A673 (cell line): ENCODE measurements at regions of chr17 and their contacts with region 1.

Region 1: GRCh38 chr17:77494664-77495435 is 354.1 kb downstream of the SEC14L1 start:
- DNase-seq: peak; percentile 84
- H3K4me3 ChIP-seq: no peak overlapping the region
- H3K27ac ChIP-seq: no peak overlapping the region
- H3K4me1 ChIP-seq: peaks cover 5% of the 10 kb centered on the region
- H3K27me3 ChIP-seq: no peaks in the 10 kb centered on the region
- CTCF ChIP-seq: peak; percentile 98

Region 2: DNA sequence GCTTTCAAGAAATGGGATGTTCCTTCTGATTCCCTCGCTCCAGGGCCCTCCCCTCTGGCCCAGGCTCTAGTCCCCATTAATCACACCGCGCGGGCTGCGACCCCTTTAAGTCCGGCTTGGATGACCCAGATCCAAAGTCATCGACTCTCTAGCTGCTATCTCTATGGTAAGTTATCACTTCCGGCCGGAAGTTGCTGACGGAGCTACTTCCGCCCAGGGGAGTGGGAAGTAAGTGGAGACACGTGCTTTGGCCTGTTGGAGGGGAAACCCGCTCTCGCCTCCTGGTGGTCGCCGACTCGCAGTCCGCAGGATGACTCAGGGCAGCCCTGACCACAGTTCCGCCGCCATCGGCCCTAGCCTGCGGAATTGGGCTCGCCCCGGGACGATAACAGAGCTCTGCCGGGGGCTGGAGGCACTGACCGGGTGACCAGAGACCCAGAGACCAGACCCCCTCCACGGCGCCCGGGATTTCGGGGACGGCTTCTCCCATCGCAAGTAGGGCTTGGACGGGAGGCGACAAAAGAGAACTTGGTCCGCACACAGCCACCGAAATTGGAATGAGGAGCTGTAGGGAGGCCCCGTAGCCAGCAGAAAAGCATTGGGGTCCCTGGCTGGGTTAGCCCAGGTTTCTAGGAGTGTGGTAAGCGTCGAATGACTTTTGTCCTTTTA is 406.3 kb before region 1 on chr17:
- CTCF ChIA-PET with region 1: no interaction called
- POLR2A ChIA-PET with region 1: no interaction called
- intact Hi-C with region 1: loop called (anchors 5 kb)
- DNase-seq: peak; percentile 98
- H3K4me3 ChIP-seq: peak overlapping the region; percentile 79
- H3K27ac ChIP-seq: peak overlapping the region; percentile 93
- H3K4me1 ChIP-seq: peaks cover 14% of the 10 kb centered on the region
- H3K27me3 ChIP-seq: no peaks in the 10 kb centered on the region
- CTCF ChIP-seq: peak; percentile 83

Region 3: DNA sequence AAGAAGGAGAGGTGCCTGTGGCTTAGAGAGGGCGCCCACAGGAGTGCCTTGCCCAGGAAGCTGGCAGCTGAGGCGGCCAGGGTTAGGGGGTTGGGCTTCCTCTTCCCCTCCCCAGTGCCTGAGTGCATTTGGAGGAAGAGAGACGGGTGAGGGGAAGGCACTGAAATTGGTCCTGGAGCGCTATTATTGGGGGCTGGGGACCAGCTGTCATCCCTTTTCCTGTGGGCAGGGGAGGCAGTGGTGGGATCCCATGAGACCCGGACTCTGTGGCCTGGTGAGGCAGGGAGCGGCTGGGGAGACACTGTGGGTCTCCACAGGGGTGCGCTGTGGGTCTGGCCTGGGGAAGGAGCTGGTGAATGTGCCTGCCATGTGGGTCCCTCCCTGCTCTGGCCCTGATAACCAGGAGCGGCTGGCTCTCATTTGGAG is 94.4 kb before region 1 on chr17:
- CTCF ChIA-PET with region 1: no interaction called
- POLR2A ChIA-PET with region 1: no interaction called
- intact Hi-C with region 1: loop called (anchors 1 kb)
- DNase-seq: peak; percentile 63
- H3K4me3 ChIP-seq: no peak overlapping the region
- H3K27ac ChIP-seq: no peak overlapping the region
- H3K4me1 ChIP-seq: peaks cover 12% of the 10 kb centered on the region
- H3K27me3 ChIP-seq: no peaks in the 10 kb centered on the region
- CTCF ChIP-seq: peak; percentile 68

Region 4: DNA sequence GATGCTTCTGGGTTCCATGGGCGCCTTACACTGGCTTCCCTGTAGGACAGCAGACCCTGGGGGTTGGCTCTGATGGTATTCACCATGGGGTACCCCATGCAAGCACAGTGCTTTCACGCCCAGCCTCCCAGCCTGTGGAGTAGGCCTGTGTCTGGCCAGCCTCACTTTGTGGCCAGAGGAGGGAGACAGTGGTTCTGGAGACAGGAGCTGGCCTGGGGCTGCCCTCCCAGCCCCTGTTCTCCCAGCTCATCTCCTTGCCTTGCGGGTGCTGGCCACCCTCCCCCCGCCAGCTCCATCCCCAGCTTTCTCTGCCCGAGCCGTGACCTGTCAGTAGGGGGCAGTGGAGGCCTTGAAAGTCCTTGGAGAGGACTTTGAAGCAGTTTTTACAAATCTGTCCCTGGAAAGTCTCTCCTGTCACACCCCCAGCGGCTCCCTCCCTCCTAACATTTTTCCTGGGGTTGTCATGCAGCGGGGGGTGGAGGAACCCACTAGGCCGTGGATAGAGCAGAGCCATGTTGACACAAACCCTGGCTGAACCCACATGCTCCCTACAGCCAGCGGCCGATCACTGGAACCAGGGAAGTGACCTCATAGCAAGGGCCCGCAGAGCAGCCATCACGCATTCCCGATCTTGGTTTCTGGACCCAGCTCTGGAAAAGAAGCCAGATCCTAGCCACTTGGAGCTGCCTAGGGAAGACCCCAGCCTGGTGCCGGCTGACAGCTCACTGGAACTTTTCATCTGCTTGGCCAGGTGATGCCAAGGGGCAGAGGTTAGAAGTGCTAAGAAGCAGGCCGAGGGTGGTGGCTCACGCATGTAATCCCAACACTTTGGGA is 64.7 kb before region 1 on chr17:
- CTCF ChIA-PET with region 1: interaction called, 6 read pairs
- POLR2A ChIA-PET with region 1: no interaction called
- intact Hi-C with region 1: loop called (anchors 1 kb)
- DNase-seq: peak; percentile 86
- H3K4me3 ChIP-seq: no peak overlapping the region
- H3K27ac ChIP-seq: no peak overlapping the region
- H3K4me1 ChIP-seq: peaks cover 60% of the 10 kb centered on the region
- H3K27me3 ChIP-seq: no peaks in the 10 kb centered on the region
- CTCF ChIP-seq: peak; percentile 82

Region 5: DNA sequence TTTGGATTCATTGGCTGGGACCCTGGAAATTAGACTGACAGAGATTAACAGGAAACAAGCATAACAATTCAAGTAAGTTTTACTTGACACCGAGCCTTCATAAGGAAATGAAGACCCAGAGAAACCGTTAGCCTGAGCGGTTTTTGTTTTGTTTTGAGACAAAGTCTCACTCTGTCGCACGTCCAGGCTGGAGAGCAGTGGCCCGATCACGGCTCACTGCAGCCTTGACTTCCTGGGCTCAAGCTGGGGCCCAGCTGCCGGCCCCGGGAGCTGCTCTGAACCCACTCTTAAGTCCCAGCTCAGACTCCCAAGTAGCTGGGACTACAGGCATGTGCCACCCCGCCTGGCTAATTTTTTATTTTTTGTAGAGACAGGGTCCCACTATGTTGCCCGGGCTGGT is 32.7 kb before region 1 on chr17:
- CTCF ChIA-PET with region 1: no interaction called
- POLR2A ChIA-PET with region 1: no interaction called
- intact Hi-C with region 1: no loop called
- DNase-seq: no peak
- H3K4me3 ChIP-seq: no peak overlapping the region
- H3K27ac ChIP-seq: peak overlapping the region; percentile 75
- H3K4me1 ChIP-seq: peaks cover 48% of the 10 kb centered on the region
- H3K27me3 ChIP-seq: no peaks in the 10 kb centered on the region
- CTCF ChIP-seq: no peak